ENCODE measurements at regions of chr9 and their contacts with region 1.

Region 1: GRCh38 chr9:69672596-69673310 is 582 bp upstream of the APBA1 start:
- H3K4me3 ChIP-seq: peak overlapping the region; percentile 64
- H3K27ac ChIP-seq: peak overlapping the region; percentile 76
- H3K4me1 ChIP-seq: 0 out of 2 replicates have a peak, but pooled peaks cover 3% of the 10 kb centered on the region
- CTCF ChIP-seq: peak; percentile 73

Region 2: GRCh38 chr9:69657269-69657668 is 15.5 kb before region 1 on chr9:
- CTCF ChIA-PET with region 1: interaction called, 23 read pairs
- POLR2A ChIA-PET with region 1: interaction called, 6 read pairs
- H3K4me3 ChIP-seq: no peak overlapping the region
- H3K27ac ChIP-seq: no peak overlapping the region
- H3K4me1 ChIP-seq: peaks cover 5% of the 10 kb centered on the region; the same call in 1 of the 2 replicates
- CTCF ChIP-seq: no peak

Region 3: DNA sequence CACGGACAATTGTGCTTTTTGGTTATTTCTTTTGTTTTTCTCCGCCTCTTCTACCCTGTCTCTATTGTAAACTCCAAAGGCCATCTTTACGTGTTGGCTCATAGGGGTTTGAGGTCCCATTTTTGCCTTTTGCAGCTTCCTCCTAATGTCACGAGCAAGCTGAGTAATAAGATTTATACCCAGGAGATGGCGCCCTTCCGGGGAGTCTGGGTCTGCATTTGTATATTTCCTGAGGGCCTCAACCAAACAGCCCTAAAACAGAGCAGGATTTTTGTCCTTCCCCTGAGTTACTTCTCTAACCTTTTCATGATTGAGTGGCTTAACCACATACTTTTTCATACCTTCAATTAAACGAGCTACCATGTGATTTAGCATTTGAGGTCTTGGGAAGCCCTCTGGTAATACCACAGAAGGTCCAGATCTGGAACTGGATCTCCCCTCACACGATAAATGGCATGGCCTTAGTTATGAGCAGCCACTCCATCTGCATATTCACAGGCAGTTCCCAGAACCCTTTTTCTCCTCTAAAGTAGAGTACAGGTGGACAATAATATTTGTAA is 136.6 kb after region 1 on chr9:
- CTCF ChIA-PET with region 1: no interaction called
- POLR2A ChIA-PET with region 1: no interaction called
- H3K4me3 ChIP-seq: no peak overlapping the region
- H3K27ac ChIP-seq: no peak overlapping the region
- H3K4me1 ChIP-seq: no peaks in the 10 kb centered on the region
- CTCF ChIP-seq: no peak

Region 4: DNA sequence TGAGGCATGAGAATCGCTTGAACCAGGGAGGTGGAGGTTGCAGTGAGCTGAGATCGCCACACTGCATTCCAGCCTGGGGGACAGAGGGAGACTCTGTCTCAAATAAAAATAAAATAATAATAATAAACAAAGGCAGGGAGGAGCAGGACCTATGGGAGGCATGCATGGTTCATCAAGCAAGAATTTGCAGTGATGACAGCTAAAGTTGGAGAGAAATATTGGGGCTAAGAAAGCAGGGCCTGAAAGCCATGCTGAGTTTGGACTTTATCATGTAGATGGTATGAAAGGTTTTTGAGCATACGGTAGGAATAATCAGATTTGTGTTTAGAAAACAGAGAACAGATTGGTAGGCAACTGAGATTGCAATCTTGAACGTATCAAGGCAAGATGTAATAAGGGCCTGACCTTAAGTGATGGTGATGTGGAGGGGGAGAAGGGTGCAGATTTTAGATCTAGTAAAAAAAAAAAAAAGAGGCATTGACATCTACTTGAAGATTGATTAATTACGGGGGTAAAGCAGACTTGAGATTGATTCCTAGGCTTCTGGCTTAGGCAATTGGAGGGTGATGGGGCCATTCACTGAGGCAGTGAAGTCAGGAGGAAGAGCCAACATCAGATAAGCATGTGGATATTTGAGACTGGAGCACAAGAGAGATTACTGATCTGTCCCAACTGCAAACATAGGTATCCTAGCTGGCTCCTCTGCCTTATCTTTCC is 198.5 kb after region 1 on chr9:
- CTCF ChIA-PET with region 1: no interaction called
- POLR2A ChIA-PET with region 1: no interaction called
- H3K4me3 ChIP-seq: no peak overlapping the region
- H3K27ac ChIP-seq: no peak overlapping the region
- H3K4me1 ChIP-seq: no peaks in the 10 kb centered on the region
- CTCF ChIP-seq: no peak